Mammary epithelial cell (primary cell): ENCODE measurements at regions of chr11 and their contacts with region 1.

Region 1: GRCh38 chr11:27296497-27296896 is 66.5 kb downstream of the CCDC34 start:
- DNase-seq: peak; percentile 45
- H3K4me3 ChIP-seq: no peak overlapping the region
- H3K27ac ChIP-seq: no peak overlapping the region
- H3K4me1 ChIP-seq: peaks cover 10% of the 10 kb centered on the region
- H3K27me3 ChIP-seq: no peaks in the 10 kb centered on the region
- CTCF ChIP-seq: peak; percentile 74 to 80

Region 2: DNA sequence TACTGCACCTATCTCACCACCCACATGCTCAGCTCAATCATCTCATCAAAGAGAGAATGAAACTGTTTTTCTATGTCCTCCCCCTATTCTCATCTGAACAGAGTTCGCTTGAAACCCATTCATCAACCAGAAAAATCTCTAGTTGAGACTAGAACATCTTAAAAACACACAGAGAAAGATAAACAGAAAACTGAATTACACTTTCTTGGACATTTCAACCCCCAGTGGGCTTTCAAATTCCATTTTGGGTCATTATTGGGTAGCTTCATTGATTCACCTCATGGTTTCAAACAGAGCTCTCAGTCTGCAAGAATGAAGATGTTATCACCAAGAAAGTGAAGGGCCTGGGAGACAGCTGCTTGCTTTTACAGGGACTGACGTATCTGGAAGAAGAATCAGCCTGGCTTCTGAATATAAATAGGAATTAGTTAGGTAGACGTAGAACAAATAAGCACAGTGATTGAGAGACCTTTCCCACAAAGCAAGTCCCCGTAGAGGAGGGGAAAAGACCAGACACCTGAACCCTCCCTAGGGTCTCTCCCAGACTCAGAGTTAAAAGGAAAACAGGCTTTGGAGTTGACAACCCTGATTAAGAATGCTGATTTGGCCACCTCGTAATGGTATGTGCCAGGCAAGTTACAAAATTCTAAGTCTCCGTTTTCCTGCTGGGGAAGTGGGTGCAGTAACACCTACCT is 100.1 kb before region 1 on chr11:
- CTCF ChIA-PET with region 1: no interaction called
- dilution Hi-C with region 1: no loop called
- in situ Hi-C with region 1: loop called in 1 of 2 experiments (anchors 5 kb)
- intact Hi-C with region 1: no loop called
- DNase-seq: no peak
- H3K4me3 ChIP-seq: no peak overlapping the region
- H3K27ac ChIP-seq: no peak overlapping the region
- H3K4me1 ChIP-seq: no peaks in the 10 kb centered on the region
- H3K27me3 ChIP-seq: no peaks in the 10 kb centered on the region
- CTCF ChIP-seq: no peak

Region 3: DNA sequence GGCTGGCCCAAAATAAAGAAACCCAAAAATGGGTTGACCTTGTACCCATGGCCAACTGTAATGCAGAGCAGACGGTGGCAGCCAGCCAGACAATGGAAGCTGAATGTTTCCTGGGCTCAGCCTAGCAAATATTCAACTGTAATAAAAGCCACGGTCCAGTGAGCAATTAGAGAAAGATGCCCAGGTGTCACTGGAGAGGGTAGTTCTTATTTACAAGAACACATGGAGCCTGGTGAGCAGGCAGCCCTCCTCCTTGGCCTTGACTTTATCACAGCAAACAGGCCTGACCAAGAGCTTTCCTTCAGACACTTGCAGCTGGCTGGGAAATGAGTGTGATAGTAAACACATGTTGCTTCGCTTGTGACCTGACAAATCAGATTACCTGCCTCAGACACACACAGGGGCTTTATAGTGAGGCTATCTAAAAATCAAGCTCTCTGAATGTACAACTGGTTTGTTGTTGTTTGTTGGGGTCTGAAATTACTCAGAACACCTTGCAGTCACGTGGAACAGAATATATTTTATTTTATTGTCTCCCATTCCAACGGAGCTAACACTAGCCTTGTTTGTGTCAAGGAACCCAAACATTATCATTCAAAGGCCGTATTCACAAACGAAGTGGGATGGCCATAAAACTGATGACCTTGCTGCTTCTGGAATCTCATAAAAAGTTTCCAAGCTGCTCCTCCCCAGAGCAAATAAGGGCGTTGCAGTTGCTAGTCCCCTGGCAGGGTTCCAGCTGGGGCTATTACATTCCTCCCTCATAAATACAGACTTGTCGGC is 94.9 kb before region 1 on chr11:
- CTCF ChIA-PET with region 1: interaction called, 3 read pairs
- dilution Hi-C with region 1: no loop called
- in situ Hi-C with region 1: loop called in 1 of 2 experiments (anchors 5 kb)
- intact Hi-C with region 1: loop called (anchors 1 kb)
- DNase-seq: peak; percentile 60
- H3K4me3 ChIP-seq: no peak overlapping the region
- H3K27ac ChIP-seq: no peak overlapping the region
- H3K4me1 ChIP-seq: no peaks in the 10 kb centered on the region
- H3K27me3 ChIP-seq: no peaks in the 10 kb centered on the region
- CTCF ChIP-seq: no peak

Region 4: DNA sequence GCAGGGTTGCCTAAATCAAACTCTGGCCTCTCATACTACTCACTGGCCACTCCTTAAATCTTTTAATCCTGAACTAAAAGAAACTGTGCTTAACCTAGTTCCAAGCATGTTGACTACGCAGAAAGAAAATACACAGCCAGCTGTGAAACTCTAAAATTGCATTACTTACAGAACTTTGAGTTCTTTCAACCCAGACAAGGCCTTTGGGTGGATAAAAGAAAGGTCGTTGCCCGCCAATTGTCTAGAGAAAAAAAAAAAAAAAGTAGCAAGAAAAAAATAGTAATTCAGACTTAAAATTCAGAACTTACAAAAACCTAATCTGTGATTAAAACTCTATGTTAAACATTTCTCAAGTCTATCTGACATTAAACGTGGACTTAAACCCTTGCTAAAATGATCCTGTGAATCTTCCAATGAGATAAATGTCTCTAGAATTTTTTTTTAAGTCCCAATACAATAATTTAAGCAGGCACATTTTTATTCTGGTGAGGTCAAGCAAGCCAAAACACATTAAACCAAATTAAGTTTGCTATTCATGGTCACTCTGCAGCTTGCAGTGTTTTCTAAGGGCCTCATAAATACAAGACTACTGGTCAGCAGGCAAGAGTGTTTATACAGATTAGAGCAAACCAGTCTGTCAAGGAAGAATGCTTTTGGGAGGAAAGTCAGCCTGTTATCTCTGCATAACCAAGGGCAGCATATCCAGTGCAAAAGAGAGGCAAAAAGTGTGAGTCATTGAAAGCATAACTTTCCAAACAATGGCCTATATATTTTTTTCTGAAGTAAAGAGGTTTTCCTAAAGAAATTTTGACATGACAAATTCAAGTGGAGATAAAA is 96.0 kb after region 1 on chr11:
- CTCF ChIA-PET with region 1: no interaction called
- dilution Hi-C with region 1: no loop called
- in situ Hi-C with region 1: no loop called
- intact Hi-C with region 1: no loop called
- DNase-seq: peak; percentile 56
- H3K4me3 ChIP-seq: no peak overlapping the region
- H3K27ac ChIP-seq: no peak overlapping the region
- H3K4me1 ChIP-seq: peaks cover 48% of the 10 kb centered on the region
- H3K27me3 ChIP-seq: no peaks in the 10 kb centered on the region
- CTCF ChIP-seq: no peak

Region 5: DNA sequence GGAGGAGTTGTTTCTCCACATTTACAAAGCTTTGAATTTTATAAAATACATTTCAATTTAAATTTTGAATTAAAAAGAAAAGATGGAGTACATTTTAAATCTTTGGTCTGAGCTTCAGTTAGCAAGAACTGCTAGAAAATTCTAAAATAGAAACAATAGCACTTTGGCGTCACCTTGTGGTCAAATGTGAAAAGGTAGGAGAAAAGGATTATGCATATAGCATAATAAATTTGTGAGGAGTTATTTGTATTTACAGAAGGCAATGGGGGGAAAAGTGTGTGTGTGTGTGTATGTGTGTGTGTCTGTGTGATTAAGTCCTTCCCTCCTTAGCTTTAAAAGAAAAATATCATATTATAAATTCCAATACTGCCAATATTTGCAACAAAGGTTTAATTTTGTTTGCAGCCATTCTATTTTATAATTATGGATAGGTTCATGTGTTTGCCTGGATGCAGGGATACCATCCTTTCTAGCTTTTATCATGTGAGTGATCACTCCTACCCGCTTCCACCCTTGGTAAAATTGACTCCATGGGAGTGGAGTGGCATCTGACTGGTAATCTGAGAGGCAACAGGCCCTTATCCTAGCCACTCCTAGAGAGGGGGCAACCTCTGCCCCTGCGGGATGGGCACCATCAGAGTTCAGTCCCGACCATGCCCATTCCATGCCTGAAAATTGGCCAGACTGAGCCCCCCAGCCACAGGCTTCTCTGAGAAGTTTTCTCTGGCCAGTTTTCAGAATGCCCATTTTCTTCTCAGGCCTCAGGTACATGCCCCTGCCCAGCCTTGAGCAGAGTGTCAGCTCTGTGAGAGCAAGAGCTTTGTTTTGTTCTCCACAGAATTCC is 189.7 kb after region 1 on chr11:
- CTCF ChIA-PET with region 1: interaction called, 4 read pairs
- dilution Hi-C with region 1: no loop called
- in situ Hi-C with region 1: no loop called
- intact Hi-C with region 1: loop called (anchors 1 kb)
- DNase-seq: peak; percentile 42
- H3K4me3 ChIP-seq: no peak overlapping the region
- H3K27ac ChIP-seq: no peak overlapping the region
- H3K4me1 ChIP-seq: no peaks in the 10 kb centered on the region
- H3K27me3 ChIP-seq: no peaks in the 10 kb centered on the region
- CTCF ChIP-seq: peak; percentile 92 to 94